GM12878 (cell line): ENCODE measurements at regions of chr2 and their contacts with region 1.

Region 1: GRCh38 chr2:73828818-73829570 is at the start of gene STAMBP:
- DNase-seq: peak; percentile 87
- ATAC-seq: peak; percentile 89
- H3K4me3 ChIP-seq: peak within 1 kb of the TSS; percentile 96
- H3K27ac ChIP-seq: peak within 1 kb of the TSS; percentile 94
- H3K4me1 ChIP-seq: peaks cover 7% of the 10 kb centered on the region; the same call in 1 of the 2 replicates
- H3K27me3 ChIP-seq: no peaks in the 10 kb centered on the region
- CTCF ChIP-seq: no peak
- EP300 ChIP-seq: no peak
- POLR2A ChIP-seq: peak; percentile 80
- RAD21 ChIP-seq: no peak
- polyA plus RNA-seq, gene STAMBP: 67.3 to 72.2 TPM

Region 2: GRCh38 chr2:73418343-73418742 is 410.7 kb before region 1 on chr2:
- CTCF ChIA-PET with region 1: no interaction called
- POLR2A ChIA-PET with region 1: no interaction called
- RAD21 ChIA-PET with region 1: no interaction called
- SMC1A ChIA-PET with region 1: no interaction called
- in situ Hi-C with region 1: no loop called
- intact Hi-C with region 1: no loop called
- DNase-seq: no peak
- ATAC-seq: no peak
- H3K4me3 ChIP-seq: no peak overlapping the region
- H3K27ac ChIP-seq: no peak overlapping the region
- H3K4me1 ChIP-seq: no peaks in the 10 kb centered on the region
- H3K27me3 ChIP-seq: no peaks in the 10 kb centered on the region
- CTCF ChIP-seq: no peak
- EP300 ChIP-seq: no peak
- POLR2A ChIP-seq: no peak
- RAD21 ChIP-seq: no peak

Region 3: DNA sequence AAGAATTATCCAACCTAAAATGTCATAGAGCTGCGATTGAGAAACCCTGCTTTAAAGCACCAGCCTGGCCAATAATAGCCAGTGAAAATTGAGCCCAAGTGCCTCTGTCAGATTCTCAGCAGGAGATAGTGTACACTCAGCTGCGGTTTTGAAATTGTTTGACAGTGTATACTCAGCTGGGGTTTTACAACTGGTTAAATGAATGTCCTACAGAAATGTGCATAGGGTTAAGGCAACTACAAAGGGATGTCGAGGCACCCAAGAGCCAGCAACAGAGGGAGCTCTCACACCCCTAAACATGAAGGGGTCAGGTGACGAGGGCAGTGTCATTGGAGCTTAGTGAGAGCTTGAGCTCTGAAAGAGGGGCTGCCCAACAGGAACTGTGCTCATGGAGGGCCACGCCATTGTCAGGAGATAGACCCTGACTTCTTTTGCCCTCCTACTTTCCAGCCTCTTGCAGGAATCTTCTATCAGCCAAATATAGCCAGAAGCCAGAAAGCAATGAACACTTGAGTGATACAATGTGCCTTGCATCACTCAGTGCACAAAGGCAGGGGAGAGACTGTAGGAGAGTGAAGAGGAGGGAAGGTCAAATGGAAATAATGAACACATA is 79.0 kb after region 1 on chr2:
- CTCF ChIA-PET with region 1: interaction called, 15 read pairs
- POLR2A ChIA-PET with region 1: no interaction called
- RAD21 ChIA-PET with region 1: interaction called, 16 read pairs
- SMC1A ChIA-PET with region 1: interaction called, 14 read pairs
- in situ Hi-C with region 1: no loop called
- intact Hi-C with region 1: no loop called
- DNase-seq: peak; percentile 26
- ATAC-seq: peak; percentile 99
- H3K4me3 ChIP-seq: no peak overlapping the region
- H3K27ac ChIP-seq: no peak overlapping the region
- H3K4me1 ChIP-seq: no peaks in the 10 kb centered on the region
- H3K27me3 ChIP-seq: no peaks in the 10 kb centered on the region
- CTCF ChIP-seq: peak; percentile 58 to 76 (median 62)
- EP300 ChIP-seq: no peak
- POLR2A ChIP-seq: no peak
- RAD21 ChIP-seq: peak; percentile 83

Region 4: DNA sequence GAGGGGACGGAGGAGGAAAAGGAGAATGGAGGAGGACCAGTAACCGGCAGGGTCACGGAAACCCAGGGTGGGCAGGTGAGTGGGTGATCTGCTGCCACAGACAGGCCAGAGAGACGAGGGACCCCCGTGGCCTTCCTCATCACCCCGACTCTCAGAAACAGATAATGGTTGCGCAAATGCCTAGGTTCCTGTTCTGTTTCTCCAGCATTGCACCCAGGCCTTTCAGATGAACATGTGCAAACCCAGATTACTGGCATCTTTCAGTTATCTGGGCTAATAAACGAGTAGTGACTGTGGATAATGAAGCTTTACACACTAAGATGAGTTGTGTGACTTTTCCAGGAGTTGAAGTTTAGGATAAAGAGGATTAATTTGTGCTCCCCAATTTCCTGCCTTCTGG is 202.2 kb after region 1 on chr2:
- CTCF ChIA-PET with region 1: interaction called, 6 read pairs
- POLR2A ChIA-PET with region 1: interaction called, 5 read pairs
- RAD21 ChIA-PET with region 1: interaction called, 16 read pairs
- SMC1A ChIA-PET with region 1: interaction called, 4 read pairs
- in situ Hi-C with region 1: no loop called
- intact Hi-C with region 1: no loop called
- DNase-seq: no peak
- ATAC-seq: no peak
- H3K4me3 ChIP-seq: peak overlapping the region; percentile 73
- H3K27ac ChIP-seq: peak overlapping the region; percentile 73
- H3K4me1 ChIP-seq: peaks cover 65% of the 10 kb centered on the region
- H3K27me3 ChIP-seq: no peaks in the 10 kb centered on the region
- CTCF ChIP-seq: no peak
- EP300 ChIP-seq: no peak
- POLR2A ChIP-seq: no peak
- RAD21 ChIP-seq: no peak

Region 5: GRCh38 chr2:74119912-74120825 is 291.2 kb after region 1 on chr2:
- CTCF ChIA-PET with region 1: interaction called, 29 read pairs
- POLR2A ChIA-PET with region 1: interaction called, 3 read pairs
- RAD21 ChIA-PET with region 1: interaction called, 8 read pairs
- SMC1A ChIA-PET with region 1: interaction called, 9 read pairs
- in situ Hi-C with region 1: no loop called
- intact Hi-C with region 1: loop called (anchors 1 kb)
- DNase-seq: peak; percentile 54
- ATAC-seq: peak; percentile 99
- H3K4me3 ChIP-seq: peak overlapping the region; percentile 95
- H3K27ac ChIP-seq: peak overlapping the region; percentile 96
- H3K4me1 ChIP-seq: peaks cover 3% of the 10 kb centered on the region; the same call in 1 of the 2 replicates
- H3K27me3 ChIP-seq: no peaks in the 10 kb centered on the region; a peak in 1 of 4 replicates
- CTCF ChIP-seq: peak; percentile 55 to 78 (median 70)
- EP300 ChIP-seq: no peak
- POLR2A ChIP-seq: peak; percentile 95
- RAD21 ChIP-seq: no peak

Region 6: GRCh38 chr2:74250189-74250631 is 421.2 kb after region 1 on chr2:
- CTCF ChIA-PET with region 1: interaction called, 16 read pairs
- POLR2A ChIA-PET with region 1: no interaction called
- RAD21 ChIA-PET with region 1: interaction called, 3 read pairs
- SMC1A ChIA-PET with region 1: interaction called, 6 read pairs
- in situ Hi-C with region 1: no loop called
- intact Hi-C with region 1: no loop called
- DNase-seq: peak; percentile 17
- ATAC-seq: peak; percentile 95
- H3K4me3 ChIP-seq: no peak overlapping the region
- H3K27ac ChIP-seq: no peak overlapping the region
- H3K4me1 ChIP-seq: no peaks in the 10 kb centered on the region
- H3K27me3 ChIP-seq: no peaks in the 10 kb centered on the region
- CTCF ChIP-seq: peak; percentile 78 to 87 (median 84)
- EP300 ChIP-seq: no peak
- POLR2A ChIP-seq: no peak
- RAD21 ChIP-seq: peak; percentile 82